A549 (cell line): ENCODE measurements at regions of chr17 and their contacts with region 1.

Region 1: GRCh38 chr17:7351665-7352501 is at the start of gene KCTD11:
- DNase-seq: peak; percentile 91 to 96
- ATAC-seq: peak; percentile 57 to 79
- H3K4me3 ChIP-seq: peak within 1 kb of the TSS; percentile 70
- H3K27ac ChIP-seq: peak within 1 kb of the TSS; percentile 92 to 96
- H3K4me1 ChIP-seq: peaks cover 52% of the 10 kb centered on the region
- CTCF ChIP-seq: peak; percentile 60
- EP300 ChIP-seq: peak in 1 of 2 experiments; percentile 39; a peak in 1 of 5 replicates
- POLR2A ChIP-seq: peak; percentile 69
- RAD21 ChIP-seq: no peak
- polyA plus RNA-seq, gene KCTD11: 6.1 and 7.0 TPM in 2 replicates

Region 2: GRCh38 chr17:7296189-7296902 is 55.5 kb before region 1 on chr17:
- CTCF ChIA-PET with region 1: interaction called, 88 read pairs
- POLR2A ChIA-PET with region 1: no interaction called
- DNase-seq: peak; percentile 86 to 89
- ATAC-seq: peak; percentile 81 to 87
- H3K4me3 ChIP-seq: no peak overlapping the region; the same call in 2 of the 3 replicates
- H3K27ac ChIP-seq: peak overlapping the region; percentile 39 to 82; a peak in 5 of 6 replicates
- H3K4me1 ChIP-seq: peaks cover 22% of the 10 kb centered on the region; the same call in 2 of the 3 replicates
- CTCF ChIP-seq: peak; percentile 99
- EP300 ChIP-seq: no peak
- POLR2A ChIP-seq: no peak
- RAD21 ChIP-seq: peak; percentile 94 to 99

Region 3: DNA sequence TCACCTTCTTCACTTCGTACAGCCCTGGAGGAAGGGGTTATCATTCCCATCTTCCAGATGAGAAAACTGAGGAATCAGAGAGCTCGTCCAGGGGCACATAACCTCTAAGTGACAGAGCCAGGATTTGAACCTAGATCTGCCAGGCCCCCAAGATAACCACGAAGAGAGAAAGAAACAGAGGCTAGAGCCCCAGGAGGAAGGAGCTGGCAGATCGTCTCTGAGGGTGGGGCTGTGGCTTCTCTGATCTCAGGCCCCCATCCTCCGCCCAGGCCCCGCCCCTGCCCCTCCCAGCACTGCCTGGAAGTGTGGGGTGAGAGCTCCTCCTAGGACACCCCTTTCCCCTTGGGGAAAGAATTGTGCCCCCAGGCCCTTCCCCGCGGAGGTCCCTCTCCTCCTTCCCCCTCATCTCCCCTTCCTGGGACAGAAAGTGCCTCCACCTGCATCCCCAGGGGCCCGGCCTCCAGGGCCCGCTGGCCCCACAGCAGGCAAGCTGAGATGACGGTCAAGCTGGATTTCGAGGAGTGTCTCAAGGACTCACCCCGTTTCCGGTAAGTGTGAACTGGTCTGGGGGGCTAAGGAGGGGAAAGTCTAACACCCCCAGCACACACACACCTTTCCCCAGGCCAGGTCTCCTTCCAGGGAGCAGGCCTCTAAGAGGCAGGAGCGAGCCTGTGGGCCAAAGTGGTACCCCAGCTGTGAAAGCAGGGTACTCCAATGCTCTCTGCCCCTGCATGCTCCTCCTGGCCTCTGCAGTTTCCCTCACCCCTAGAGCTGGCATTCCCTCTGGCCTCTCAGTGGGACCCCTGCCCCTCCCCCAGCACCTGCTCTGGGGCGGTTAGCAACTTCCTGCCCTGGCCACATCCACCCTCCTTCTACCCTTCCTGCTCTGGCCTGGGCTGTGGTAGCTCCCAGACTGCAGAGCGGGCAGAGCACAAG is 15.4 kb before region 1 on chr17 and contains the start of gene ACAP1:
- CTCF ChIA-PET with region 1: interaction called, 433 read pairs
- POLR2A ChIA-PET with region 1: interaction called, 3 read pairs
- DNase-seq: no peak
- ATAC-seq: peak in 1 of 2 experiments; percentile 23; a peak in 1 of 6 replicates
- H3K4me3 ChIP-seq: no peak within 1 kb of the TSS
- H3K27ac ChIP-seq: no peak within 1 kb of the TSS
- H3K4me1 ChIP-seq: peaks cover 4% of the 10 kb centered on the region; the same call in 1 of the 3 replicates
- CTCF ChIP-seq: no peak
- EP300 ChIP-seq: no peak
- POLR2A ChIP-seq: no peak
- RAD21 ChIP-seq: no peak
- polyA plus RNA-seq, gene ACAP1: 0.03 and 0.41 TPM in 2 replicates

Region 4: DNA sequence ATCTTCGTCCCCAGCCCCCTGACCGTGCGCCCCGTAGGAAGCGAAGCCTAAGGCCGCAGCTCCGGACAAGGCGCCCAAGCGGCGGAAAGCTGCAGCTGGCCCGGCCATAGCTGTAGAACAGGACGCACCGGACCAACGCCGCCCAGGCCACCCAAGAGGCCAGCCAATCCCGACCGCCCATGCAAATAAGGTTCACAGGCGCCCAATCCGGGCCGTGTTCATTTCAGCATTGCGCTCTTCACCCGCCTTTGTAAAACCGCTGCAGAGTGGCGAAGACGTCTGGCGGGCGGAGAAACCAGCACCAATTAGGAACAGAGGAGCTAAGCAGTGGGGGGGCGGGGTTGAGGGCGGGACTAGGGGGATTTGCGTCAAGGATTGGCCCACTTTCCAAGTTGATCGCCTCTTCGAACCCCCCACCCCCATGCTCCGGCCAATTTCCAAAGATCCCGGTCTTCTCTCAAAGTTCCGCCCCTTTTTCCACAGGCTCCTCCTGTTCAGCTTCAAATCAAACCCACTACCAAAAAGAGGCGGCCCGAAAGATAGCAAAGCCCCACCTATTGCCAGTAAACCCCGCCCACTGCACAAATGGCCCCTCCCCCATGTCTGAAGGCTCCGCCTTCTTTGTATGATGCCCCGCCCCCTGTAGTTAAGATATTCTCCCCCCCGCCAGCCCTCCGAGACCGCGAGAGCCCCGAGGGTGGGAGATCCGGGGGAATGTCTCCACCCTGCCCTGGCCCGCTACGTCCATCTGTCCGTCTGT is 52.3 kb after region 1 on chr17 and contains the start of gene TMEM256:
- CTCF ChIA-PET with region 1: interaction called, 34 read pairs
- POLR2A ChIA-PET with region 1: interaction called, 25 read pairs
- DNase-seq: peak; percentile 98 to 100
- ATAC-seq: peak; percentile 85 to 97
- H3K4me3 ChIP-seq: peak within 1 kb of the TSS; percentile 88
- H3K27ac ChIP-seq: peak within 1 kb of the TSS; percentile 81 to 92
- H3K4me1 ChIP-seq: peaks cover 28% of the 10 kb centered on the region
- CTCF ChIP-seq: no peak
- EP300 ChIP-seq: no peak
- POLR2A ChIP-seq: peak; percentile 88
- RAD21 ChIP-seq: no peak
- polyA plus RNA-seq, gene TMEM256: 127 and 210 TPM in 2 replicates

Region 5: DNA sequence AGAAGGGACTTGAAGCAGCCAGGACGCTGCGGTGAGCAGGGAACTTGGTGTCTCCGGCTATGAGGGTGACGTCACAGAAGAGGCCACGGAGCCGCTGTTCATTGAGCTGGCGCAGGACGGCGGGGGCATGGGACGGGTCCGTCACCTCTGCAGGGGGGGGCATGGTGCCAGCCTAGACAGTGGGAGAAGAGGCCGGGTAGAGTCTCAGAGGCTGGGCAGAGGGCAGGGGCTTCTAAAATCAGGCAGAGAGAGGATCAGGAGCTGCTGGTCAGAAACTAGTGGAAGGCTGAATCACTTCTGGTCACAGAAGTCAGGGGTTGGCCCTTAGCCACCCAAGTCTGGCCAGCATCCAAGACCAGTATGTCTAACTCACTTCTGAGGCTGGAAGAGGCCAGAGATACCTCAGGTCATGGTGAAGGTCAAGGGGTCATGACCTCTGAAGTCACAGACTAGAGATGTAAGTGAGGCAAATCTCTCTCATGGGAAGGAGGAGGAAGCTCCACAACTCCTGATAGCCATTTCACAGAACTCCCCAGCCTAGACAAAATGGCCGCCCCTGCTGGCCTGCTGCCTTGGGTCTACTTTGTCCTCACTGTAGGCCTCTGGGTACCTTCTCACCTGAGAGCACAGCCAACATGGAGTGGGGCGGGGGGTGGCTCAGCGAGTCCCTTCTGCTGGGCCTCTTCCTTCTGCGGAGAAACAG is 114.9 kb after region 1 on chr17:
- CTCF ChIA-PET with region 1: interaction called, 17 read pairs
- POLR2A ChIA-PET with region 1: no interaction called
- DNase-seq: no peak
- ATAC-seq: peak; percentile 37 to 39; a peak in 4 of 6 replicates
- H3K4me3 ChIP-seq: no peak overlapping the region
- H3K27ac ChIP-seq: peak overlapping the region in 1 of 2 experiments; percentile 57; a peak in 3 of 6 replicates
- H3K4me1 ChIP-seq: peaks cover 24% of the 10 kb centered on the region
- CTCF ChIP-seq: no peak
- EP300 ChIP-seq: no peak
- POLR2A ChIP-seq: no peak
- RAD21 ChIP-seq: no peak

Region 6: GRCh38 chr17:7515911-7516610 is 164.2 kb after region 1 on chr17:
- CTCF ChIA-PET with region 1: interaction called, 33 read pairs
- POLR2A ChIA-PET with region 1: no interaction called
- DNase-seq: peak in 1 of 2 experiments; percentile 33
- ATAC-seq: no peak
- H3K4me3 ChIP-seq: no peak overlapping the region
- H3K27ac ChIP-seq: no peak overlapping the region
- H3K4me1 ChIP-seq: no peaks in the 10 kb centered on the region
- CTCF ChIP-seq: no peak
- EP300 ChIP-seq: no peak
- POLR2A ChIP-seq: no peak
- RAD21 ChIP-seq: no peak